ENCODE measurements at regions of chr1 and their contacts with region 1.

Region 1: DNA sequence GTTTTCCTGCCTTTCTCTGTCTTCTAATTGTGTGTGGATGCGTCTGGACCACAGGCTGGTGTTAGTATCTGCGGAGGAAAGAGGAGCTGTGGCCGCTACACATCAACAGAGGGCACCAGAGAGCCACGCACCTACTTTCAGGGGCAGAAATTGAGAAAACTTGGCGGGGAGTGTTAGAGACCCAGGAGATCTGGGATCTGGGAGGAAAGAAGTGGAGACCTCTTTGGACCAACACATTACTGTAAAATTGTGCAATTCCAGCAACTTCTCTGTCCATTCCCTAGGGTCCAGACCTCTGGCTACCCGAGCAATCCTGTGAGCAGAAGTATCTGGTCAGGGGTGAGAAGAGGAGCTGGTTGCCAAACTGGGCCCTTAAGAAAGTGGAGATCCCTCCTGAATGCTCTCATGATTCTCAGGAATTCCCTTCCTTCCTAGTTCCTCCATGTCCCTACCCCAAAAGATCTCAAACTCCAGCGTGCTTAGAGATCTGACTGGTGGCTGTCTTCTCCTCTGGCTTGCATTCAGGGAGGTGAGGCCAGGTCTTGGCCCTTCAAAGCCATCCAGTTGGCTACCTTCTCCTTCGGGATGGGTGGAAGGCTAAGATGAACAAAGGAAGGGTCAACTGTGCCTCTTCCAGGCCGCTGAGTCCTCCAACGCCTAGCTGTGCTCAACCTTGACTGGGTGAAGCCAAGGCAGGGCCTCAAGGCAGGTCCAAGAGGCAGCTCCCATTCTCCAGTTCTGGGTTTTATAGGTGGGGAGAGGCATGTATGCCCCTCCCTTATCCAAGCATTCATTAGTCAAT is 1.2 kb upstream of the KIRREL1 start:
- DNase-seq: no peak
- H3K4me3 Mint-ChIP-seq: no peak overlapping the region
- H3K27ac Mint-ChIP-seq: no peak overlapping the region
- H3K4me1 Mint-ChIP-seq: no peaks in the 10 kb centered on the region
- H3K27me3 Mint-ChIP-seq: peaks cover 41% of the 10 kb centered on the region

Region 2: DNA sequence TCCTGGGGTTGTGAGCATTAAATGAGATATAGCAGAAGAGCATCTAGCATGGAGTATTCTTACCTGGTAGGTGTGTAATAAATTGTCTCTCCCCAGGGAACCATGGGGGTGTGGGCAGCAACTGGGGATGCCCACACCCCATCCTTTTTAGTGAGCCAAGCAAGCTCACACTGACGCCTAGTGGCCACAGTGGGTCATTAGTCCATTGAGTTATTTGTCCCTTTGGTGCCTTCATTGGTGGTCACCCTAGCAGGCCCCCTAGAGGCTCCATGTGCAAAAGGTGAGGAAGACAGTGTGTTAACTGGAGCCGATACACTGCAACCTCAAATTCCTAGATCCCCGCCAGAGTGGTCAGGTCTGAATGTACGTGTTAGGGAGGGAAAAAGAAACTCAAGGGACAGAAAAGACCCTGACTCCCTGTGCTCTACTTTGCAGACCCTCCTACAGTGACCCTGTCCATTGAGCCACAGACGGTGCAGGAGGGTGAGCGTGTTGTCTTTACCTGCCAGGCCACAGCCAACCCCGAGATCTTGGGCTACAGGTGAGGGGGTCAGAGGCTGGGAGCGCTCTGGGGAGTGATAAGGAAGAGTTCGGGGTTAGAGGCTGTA is 95.2 kb after region 1 on chr1:
- intact Hi-C with region 1: loop called (anchors 1 kb)
- DNase-seq: peak; percentile 5
- H3K4me3 Mint-ChIP-seq: no peak overlapping the region
- H3K27ac Mint-ChIP-seq: no peak overlapping the region
- H3K4me1 Mint-ChIP-seq: no peaks in the 10 kb centered on the region
- H3K27me3 Mint-ChIP-seq: no peaks in the 10 kb centered on the region

Region 3: GRCh38 chr1:159089184-159089791 is 1097.1 kb after region 1 on chr1:
- intact Hi-C with region 1: no loop called
- DNase-seq: no peak
- H3K4me3 Mint-ChIP-seq: no peak overlapping the region
- H3K27ac Mint-ChIP-seq: peak overlapping the region; percentile 54
- H3K4me1 Mint-ChIP-seq: peaks cover 54% of the 10 kb centered on the region
- H3K27me3 Mint-ChIP-seq: no peaks in the 10 kb centered on the region

Measured in activated T-helper 1 cell treated with anti-CD3 and anti-CD28 coated beads, Interleukin-12 subunit alpha, Interleukin-12 subunit beta, Interleukin-2, Interleukin-4 antibody, amounts not matched to agents 30 ng/mL and 10 ng/mL and 1 ng/mL, durations not matched to agents 14 hours and 24 hours and 36 hours (primary cell).